ENCODE measurements at regions of chr2 and their contacts with region 1.

Region 1: GRCh38 chr2:190791347-190791975 is 89.2 kb upstream of the GLS start:
- DNase-seq: no peak
- ATAC-seq: peak in 1 of 2 experiments; percentile 23; a peak in 1 of 6 replicates
- H3K4me3 ChIP-seq: no peak overlapping the region
- H3K27ac ChIP-seq: peak overlapping the region; percentile 12 to 57; a peak in 4 of 6 replicates
- H3K4me1 ChIP-seq: peaks cover 43% of the 10 kb centered on the region
- CTCF ChIP-seq: no peak
- EP300 ChIP-seq: no peak
- POLR2A ChIP-seq: no peak
- RAD21 ChIP-seq: no peak

Region 2: GRCh38 chr2:190607014-190607597 is 184.4 kb before region 1 on chr2:
- CTCF ChIA-PET with region 1: no interaction called
- POLR2A ChIA-PET with region 1: no interaction called
- DNase-seq: peak in 1 of 2 experiments; percentile 61
- ATAC-seq: peak; percentile 76 to 81
- H3K4me3 ChIP-seq: peak overlapping the region; percentile 33; the same call in 2 of the 3 replicates
- H3K27ac ChIP-seq: peak overlapping the region; percentile 88 to 93
- H3K4me1 ChIP-seq: peaks cover 47% of the 10 kb centered on the region
- CTCF ChIP-seq: no peak
- EP300 ChIP-seq: no peak; a peak in 1 of 5 replicates
- POLR2A ChIP-seq: no peak
- RAD21 ChIP-seq: no peak

Region 3: GRCh38 chr2:190804182-190804795 is 12.8 kb after region 1 on chr2:
- CTCF ChIA-PET with region 1: interaction called, 12 read pairs
- POLR2A ChIA-PET with region 1: interaction called, 5 read pairs
- DNase-seq: peak in 1 of 2 experiments; percentile 27
- ATAC-seq: peak in 1 of 2 experiments; percentile 55; a peak in 3 of 6 replicates
- H3K4me3 ChIP-seq: no peak overlapping the region
- H3K27ac ChIP-seq: peak overlapping the region; percentile 38 to 59; a peak in 5 of 6 replicates
- H3K4me1 ChIP-seq: peaks cover 32% of the 10 kb centered on the region
- CTCF ChIP-seq: peak; percentile 78
- EP300 ChIP-seq: no peak
- POLR2A ChIP-seq: no peak
- RAD21 ChIP-seq: peak; percentile 69 to 85

Region 4: GRCh38 chr2:190940454-190940853 is 149.0 kb after region 1 on chr2:
- CTCF ChIA-PET with region 1: no interaction called
- POLR2A ChIA-PET with region 1: no interaction called
- DNase-seq: no peak
- ATAC-seq: no peak
- H3K4me3 ChIP-seq: no peak overlapping the region
- H3K27ac ChIP-seq: peak overlapping the region in 1 of 2 experiments; percentile 12; a peak in 2 of 6 replicates
- H3K4me1 ChIP-seq: peaks cover 76% of the 10 kb centered on the region
- CTCF ChIP-seq: no peak
- EP300 ChIP-seq: no peak
- POLR2A ChIP-seq: no peak
- RAD21 ChIP-seq: no peak

Measured in A549 (cell line).